AG04449 (cell line): ENCODE measurements at regions of chr17 and their contacts with region 1.

Region 1: GRCh38 chr17:78360371-78361224 is 721 bp upstream of the SOCS3 start:
- DNase-seq: no peak
- H3K4me3 ChIP-seq: peak overlapping the region; percentile 87
- CTCF ChIP-seq: peak; percentile 99

Region 2: DNA sequence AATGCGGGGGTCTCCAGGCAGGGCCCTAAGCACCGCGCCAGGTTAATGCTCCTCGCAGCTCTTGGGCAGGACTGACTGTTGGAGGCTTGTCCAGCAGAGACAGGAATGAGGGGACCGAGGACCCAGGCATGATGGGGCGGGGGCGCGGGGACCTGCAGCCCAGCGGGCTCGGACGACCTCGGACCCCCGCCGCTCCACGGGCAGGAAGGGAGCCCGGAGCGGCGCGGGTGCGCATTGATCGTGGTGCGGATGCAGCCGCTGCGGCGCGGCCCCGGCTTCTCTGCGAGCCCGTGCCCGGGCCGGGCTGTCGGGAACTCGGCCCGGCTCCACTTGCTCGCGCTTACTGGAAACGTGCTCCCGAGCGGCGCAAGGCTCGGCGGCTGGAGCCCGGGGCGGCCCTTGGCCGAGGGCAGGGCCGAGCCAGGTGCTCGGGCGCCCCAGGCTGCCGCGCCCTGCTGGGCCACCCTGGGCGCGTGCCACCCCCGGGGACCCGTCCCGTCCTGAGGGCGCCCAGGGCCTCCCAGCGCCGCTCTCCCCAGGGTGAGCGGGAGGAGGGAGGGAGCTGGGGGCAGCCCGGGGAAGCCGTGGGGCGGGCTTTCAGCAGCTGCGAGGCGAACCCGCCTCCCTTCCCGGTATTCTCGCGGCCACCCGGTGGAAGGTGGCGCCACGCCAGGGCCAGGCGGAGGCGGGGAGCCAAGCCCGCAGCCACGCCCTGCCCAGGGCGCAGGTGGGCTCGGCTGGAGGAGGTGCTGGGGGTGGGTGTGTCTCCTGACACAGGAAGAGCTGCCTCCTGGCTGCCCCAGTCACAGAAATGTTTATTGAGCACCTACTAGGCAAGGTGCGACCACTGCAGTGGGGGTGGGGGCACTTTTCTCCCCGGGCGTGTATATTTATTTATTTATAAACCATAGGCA is 46.6 kb before region 1 on chr17:
- CTCF ChIA-PET with region 1: interaction called, 7 read pairs
- POLR2A ChIA-PET with region 1: interaction called, 16 read pairs
- DNase-seq: no peak
- H3K4me3 ChIP-seq: peak overlapping the region; percentile 43
- CTCF ChIP-seq: no peak

Region 3: GRCh38 chr17:78341559-78342448 is 18.8 kb before region 1 on chr17:
- CTCF ChIA-PET with region 1: interaction called, 15 read pairs
- POLR2A ChIA-PET with region 1: interaction called, 16 read pairs
- DNase-seq: no peak
- H3K4me3 ChIP-seq: peak overlapping the region; percentile 25
- CTCF ChIP-seq: peak; percentile 0

Region 4: DNA sequence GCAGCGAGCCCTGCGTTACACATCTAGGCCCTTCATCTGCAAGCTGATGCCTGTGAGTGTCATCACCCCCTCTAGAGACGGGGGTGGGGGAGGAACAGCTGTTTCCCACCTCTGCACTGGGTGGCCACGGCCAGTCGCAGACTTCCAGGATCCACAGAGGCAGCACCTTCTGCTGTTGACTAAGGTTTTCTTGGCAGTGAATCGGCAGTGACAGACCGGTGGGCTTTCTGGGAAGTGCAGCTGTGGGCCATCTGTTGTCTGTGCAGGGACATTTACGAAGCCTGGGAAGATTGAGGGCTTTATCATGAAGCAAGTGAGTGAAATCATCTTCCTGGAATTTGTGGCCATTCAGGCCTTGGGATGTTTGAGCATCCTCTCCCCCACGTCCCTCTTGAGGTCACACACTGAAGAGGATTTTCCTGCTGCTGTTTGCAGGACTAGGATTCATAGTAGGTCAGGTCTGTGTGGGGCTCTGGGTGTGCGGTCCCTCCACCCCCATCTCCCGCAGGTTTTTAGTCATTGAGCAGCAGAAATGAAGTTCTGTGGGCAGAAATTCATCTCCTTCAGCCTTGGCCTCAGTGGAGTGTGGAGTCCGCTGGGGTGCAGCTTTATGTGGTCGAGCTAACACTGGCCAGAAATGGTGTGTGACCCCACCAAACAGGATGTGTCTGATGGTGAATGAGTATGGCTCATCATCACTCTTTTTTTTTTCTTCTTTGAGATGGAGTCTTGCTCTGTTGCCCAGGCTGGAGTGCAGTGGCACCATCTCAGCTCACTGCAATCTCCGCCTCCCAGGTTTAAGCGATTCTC is 29.8 kb after region 1 on chr17:
- CTCF ChIA-PET with region 1: interaction called, 22 read pairs
- POLR2A ChIA-PET with region 1: interaction called, 6 read pairs
- DNase-seq: peak; percentile 96
- H3K4me3 ChIP-seq: no peak overlapping the region
- CTCF ChIP-seq: peak; percentile 11

Region 5: DNA sequence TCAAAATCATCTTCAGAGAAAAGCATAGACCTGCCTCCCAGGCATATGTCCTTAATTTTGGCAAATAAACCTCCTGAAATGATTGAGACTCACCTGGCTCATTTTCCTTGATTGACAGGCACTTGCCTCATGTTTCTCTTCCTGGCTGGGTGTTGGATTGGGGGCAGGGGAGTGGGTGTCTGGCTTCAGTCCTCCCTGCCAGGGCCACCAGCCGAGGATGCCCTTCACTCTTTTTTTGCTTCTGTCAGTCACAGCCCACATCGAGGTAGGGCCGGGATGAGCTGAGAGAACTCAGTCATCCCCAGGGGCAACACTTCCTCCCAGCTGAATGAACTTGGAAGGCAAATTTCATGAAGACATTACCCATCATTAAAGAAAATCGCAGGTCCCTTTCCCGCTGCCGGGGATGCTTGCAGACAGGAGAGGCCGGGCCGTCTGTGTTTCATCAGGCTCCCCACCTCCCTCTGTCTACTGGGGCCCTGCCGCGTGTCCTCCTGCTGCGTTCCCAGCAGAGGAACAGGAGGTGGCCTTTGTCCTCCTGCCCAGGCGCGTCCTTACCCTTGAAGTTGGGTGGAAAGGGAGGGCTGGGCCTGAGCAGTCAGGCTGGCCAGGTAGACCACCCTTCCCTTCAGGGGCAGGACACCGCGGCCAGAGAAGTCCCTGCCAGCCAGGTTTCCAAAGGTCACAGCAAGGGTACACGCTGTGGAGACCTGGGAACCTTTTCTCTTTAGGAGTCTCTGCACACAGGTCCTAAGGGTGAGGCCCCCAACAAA is 227.8 kb after region 1 on chr17:
- CTCF ChIA-PET with region 1: no interaction called
- POLR2A ChIA-PET with region 1: no interaction called
- DNase-seq: no peak
- H3K4me3 ChIP-seq: no peak overlapping the region
- CTCF ChIP-seq: no peak